ENCODE measurements at regions of chr4 and their contacts with region 1.

Region 1: GRCh38 chr4:174423257-174423944 is 98.9 kb downstream of the HPGD start:
- DNase-seq: peak; percentile 86
- ATAC-seq: peak; percentile 100
- H3K4me3 ChIP-seq: peak overlapping the region; percentile 12; the same call in 1 of the 2 replicates
- H3K27ac ChIP-seq: peak overlapping the region; percentile 71
- H3K4me1 ChIP-seq: peaks cover 16% of the 10 kb centered on the region
- H3K27me3 ChIP-seq: no peaks in the 10 kb centered on the region
- CTCF ChIP-seq: no peak

Region 2: GRCh38 chr4:174292473-174292872 is 130.9 kb before region 1 on chr4:
- CTCF ChIA-PET with region 1: no interaction called
- POLR2A ChIA-PET with region 1: no interaction called
- intact Hi-C with region 1: no loop called
- DNase-seq: no peak
- ATAC-seq: no peak
- H3K4me3 ChIP-seq: no peak overlapping the region
- H3K27ac ChIP-seq: no peak overlapping the region
- H3K4me1 ChIP-seq: no peaks in the 10 kb centered on the region
- H3K27me3 ChIP-seq: no peaks in the 10 kb centered on the region
- CTCF ChIP-seq: no peak

Region 3: DNA sequence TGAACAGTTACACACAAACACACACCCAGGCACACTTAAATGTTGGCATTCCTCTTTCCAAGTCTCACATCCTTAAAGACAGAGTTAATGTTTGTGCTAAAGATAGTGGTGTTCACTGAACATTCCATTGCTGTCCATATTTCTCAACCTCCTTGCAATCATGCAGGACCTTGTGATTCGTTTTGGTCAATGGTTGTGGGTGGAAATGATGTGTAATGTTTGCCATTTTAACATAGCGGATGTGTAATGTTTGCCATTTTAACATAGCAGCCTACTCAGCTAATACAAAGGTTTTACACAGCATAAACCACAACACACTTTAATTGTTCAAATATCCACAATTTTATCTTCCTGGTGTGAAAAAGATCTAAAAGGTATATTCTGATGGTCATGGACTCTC is 45.8 kb before region 1 on chr4:
- CTCF ChIA-PET with region 1: no interaction called
- POLR2A ChIA-PET with region 1: interaction called, 4 read pairs
- intact Hi-C with region 1: loop called (anchors 1 kb)
- DNase-seq: peak; percentile 87
- ATAC-seq: peak; percentile 98
- H3K4me3 ChIP-seq: no peak overlapping the region
- H3K27ac ChIP-seq: peak overlapping the region; percentile 74
- H3K4me1 ChIP-seq: peaks cover 18% of the 10 kb centered on the region
- H3K27me3 ChIP-seq: no peaks in the 10 kb centered on the region
- CTCF ChIP-seq: no peak

Region 4: DNA sequence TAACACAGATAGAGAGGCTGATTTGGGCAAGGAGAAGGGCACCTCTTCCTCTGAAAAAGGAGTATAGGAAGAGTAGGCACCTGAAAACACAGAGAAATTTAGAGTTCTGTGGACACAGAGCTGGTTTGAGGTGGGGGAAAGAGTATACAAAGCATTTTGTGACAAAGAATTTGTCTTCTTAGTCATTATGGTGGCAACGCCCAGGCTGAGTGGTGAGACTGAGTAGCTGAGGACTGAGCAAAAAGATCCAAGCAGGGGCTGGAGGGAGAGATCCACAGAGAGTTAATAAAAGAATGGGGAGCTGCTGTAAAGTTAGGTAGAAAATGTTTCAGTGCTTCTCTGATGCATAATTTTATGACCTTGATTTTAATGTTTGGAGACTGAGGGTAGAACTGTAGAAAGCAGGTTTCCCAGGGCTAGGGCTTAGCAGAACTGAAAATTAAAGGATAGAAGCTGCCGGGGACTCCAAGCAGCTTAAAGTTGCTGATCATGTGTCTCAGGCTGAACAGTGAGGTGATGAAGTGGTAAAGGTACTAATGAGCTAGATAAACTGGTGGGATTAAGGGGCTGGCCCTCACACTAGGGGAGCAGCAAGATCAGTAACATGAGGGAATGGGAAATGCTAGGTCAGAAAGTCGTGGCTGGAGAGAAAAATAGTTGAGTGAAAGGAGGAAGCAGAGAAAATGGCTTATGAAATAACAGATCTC is 20.8 kb before region 1 on chr4:
- CTCF ChIA-PET with region 1: no interaction called
- POLR2A ChIA-PET with region 1: no interaction called
- intact Hi-C with region 1: loop called (anchors 2 kb)
- DNase-seq: peak; percentile 63
- ATAC-seq: peak; percentile 68
- H3K4me3 ChIP-seq: no peak overlapping the region
- H3K27ac ChIP-seq: peak overlapping the region; percentile 79
- H3K4me1 ChIP-seq: peaks cover 43% of the 10 kb centered on the region
- H3K27me3 ChIP-seq: no peaks in the 10 kb centered on the region
- CTCF ChIP-seq: no peak

Region 5: DNA sequence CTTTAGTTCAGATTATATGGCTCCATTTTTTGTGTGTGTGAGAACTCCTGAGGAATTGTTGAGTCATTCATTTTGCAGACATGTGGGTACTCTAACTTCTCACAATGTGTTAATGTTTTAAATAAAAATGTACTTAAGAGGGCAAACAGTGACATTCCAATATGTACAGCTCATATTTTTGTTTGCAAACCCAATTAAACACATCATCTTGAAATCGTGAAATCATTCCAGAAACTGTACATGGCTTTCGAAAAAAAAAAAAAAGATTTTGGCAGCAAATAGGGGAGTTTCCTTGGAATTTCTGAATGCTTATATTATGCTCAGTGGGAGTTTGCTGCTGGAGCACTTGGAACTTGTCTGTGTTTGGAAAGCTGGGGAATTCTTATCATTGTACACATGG is 13.9 kb after region 1 on chr4:
- CTCF ChIA-PET with region 1: interaction called, 7 read pairs
- POLR2A ChIA-PET with region 1: no interaction called
- intact Hi-C with region 1: loop called (anchors 1 kb)
- DNase-seq: peak; percentile 86
- ATAC-seq: peak; percentile 96
- H3K4me3 ChIP-seq: no peak overlapping the region
- H3K27ac ChIP-seq: peak overlapping the region; percentile 82
- H3K4me1 ChIP-seq: peaks cover 18% of the 10 kb centered on the region
- H3K27me3 ChIP-seq: no peaks in the 10 kb centered on the region
- CTCF ChIP-seq: no peak

Region 6: DNA sequence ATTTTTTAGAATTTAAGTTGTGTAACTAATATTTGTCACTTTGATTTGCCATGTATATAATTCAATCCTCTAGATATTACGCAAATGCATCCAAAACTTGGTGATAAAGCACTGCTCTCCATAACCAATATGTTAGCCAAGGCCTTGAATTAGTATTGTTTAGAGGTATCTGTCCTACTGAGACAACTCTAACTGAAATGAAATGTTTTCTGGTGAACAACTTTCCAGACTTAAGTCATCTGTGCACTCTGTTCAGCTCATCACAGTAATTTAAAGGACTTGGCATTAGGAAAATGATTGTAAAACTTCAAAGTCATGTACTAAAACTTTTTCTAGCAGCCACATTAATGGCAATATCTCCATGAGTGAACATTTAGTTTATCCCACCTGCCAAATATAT is 25.8 kb after region 1 on chr4:
- CTCF ChIA-PET with region 1: no interaction called
- POLR2A ChIA-PET with region 1: no interaction called
- intact Hi-C with region 1: no loop called
- DNase-seq: no peak
- ATAC-seq: no peak
- H3K4me3 ChIP-seq: no peak overlapping the region
- H3K27ac ChIP-seq: no peak overlapping the region
- H3K4me1 ChIP-seq: peaks cover 10% of the 10 kb centered on the region
- H3K27me3 ChIP-seq: no peaks in the 10 kb centered on the region
- CTCF ChIP-seq: no peak

Region 7: DNA sequence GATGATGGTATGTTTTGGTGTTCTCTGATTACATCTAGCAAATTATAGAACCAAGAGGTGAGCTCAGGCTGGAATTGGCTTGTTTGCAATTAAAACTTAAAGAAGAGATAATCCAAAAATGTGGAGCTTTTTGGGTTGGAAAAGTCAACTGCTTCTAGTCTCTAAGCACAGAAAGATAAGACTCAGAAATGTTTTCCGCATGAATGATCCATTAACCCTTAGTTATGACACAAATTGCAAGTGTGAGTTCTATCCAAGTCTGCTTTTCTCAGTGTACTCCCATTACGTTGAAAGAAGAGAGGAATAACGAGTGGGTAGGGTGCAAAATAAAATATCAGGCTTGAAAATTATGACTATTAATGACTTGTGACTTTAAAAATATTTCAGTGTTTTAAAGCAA is 60.4 kb after region 1 on chr4:
- CTCF ChIA-PET with region 1: no interaction called
- POLR2A ChIA-PET with region 1: no interaction called
- intact Hi-C with region 1: loop called (anchors 10 kb)
- DNase-seq: no peak
- ATAC-seq: no peak
- H3K4me3 ChIP-seq: no peak overlapping the region
- H3K27ac ChIP-seq: no peak overlapping the region
- H3K4me1 ChIP-seq: no peaks in the 10 kb centered on the region
- H3K27me3 ChIP-seq: no peaks in the 10 kb centered on the region
- CTCF ChIP-seq: no peak

Region 8: DNA sequence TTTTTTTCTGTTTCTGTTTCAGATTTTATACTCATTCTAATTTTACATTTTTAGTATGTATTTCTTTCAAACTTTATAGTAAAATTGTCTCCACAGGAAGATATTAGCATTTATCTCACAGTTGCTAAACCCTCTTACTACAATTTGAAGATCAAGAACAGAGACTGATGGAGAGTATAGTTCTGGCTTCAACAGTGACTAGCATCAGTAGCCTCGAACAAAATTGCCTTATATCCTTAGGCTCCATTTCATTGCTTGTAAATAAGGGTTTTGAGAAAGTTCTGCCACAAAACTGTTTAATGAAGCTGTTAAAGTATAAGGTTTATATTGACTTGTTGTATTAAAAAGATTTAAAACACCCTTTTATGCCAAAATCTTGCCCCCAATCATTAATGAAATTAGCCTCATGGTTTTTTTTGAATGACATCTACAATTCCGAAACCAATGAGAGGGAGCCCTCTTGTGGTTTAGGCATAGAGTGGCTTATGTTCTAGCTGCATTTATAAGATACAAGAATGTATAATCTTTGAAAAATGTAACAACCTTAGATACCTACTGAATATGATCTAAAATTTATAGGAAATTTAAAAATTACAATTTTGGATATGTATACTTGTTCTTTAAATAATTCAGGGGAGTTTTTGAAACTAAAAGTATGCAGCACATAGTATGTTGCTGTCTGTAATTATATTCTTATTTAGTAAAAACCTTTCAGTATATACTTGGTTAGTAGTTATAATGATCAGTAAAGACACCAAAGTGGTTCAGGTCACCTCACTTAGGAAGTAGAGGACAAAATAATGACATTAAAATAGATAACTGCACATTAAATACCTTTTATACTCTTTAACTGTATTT is 208.7 kb after region 1 on chr4:
- CTCF ChIA-PET with region 1: no interaction called
- POLR2A ChIA-PET with region 1: no interaction called
- intact Hi-C with region 1: no loop called
- DNase-seq: peak; percentile 50
- ATAC-seq: peak; percentile 39
- H3K4me3 ChIP-seq: no peak overlapping the region
- H3K27ac ChIP-seq: 0 out of 2 replicates have a peak overlapping the region, but pooled peaks have one; percentile 12
- H3K4me1 ChIP-seq: peaks cover 45% of the 10 kb centered on the region
- H3K27me3 ChIP-seq: no peaks in the 10 kb centered on the region
- CTCF ChIP-seq: peak; percentile 88

Region 9: DNA sequence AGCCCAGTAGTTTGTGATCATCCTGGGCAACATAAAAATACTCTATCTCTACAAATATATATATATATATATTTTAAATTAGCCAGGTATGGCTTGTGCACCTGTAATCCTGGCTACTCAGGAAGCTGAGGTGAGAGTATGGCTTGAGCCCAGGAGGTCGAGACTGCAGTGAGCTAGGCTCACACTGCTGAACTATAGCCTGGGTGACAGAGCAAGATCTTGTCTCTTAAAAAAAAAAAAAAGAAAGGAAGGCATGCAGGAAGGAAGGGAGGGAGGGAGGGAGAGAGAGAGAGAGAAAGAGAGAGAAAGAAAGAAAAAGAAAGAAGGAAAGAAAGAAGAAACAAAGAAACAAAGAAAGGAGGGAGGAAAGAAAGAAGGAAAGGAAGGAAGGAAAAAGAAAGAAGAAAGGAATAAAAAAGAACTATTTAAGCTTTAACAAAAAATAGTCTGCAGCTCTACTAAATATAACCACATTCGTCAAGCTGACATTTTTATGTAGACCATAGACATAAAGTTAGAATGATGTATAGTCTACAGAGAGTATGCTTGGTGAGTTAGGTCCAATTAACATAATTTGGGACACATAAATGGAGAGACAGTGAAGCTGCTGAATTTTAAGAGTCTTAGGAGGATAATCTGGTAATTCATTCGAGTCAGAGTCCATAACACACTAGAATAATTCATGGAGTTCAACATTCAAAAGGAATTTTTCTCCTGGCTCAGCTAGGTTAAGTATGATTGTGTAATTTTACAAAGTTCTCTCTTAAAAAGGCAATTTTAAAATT is 293.8 kb after region 1 on chr4:
- CTCF ChIA-PET with region 1: no interaction called
- POLR2A ChIA-PET with region 1: no interaction called
- intact Hi-C with region 1: no loop called
- DNase-seq: no peak
- ATAC-seq: no peak
- H3K4me3 ChIP-seq: no peak overlapping the region
- H3K27ac ChIP-seq: no peak overlapping the region
- H3K4me1 ChIP-seq: peaks cover 6% of the 10 kb centered on the region; the same call in 1 of the 2 replicates
- H3K27me3 ChIP-seq: no peaks in the 10 kb centered on the region
- CTCF ChIP-seq: no peak

Measured in PC-3 (cell line).